ENCODE measurements at regions of chr10 and their contacts with region 1.

Region 1: GRCh38 chr10:128530301-128530700 is 404.1 kb upstream of the MKI67 start:
- DNase-seq: no peak
- H3K4me3 ChIP-seq: no peak overlapping the region
- H3K27ac ChIP-seq: no peak overlapping the region
- H3K4me1 ChIP-seq: no peaks in the 10 kb centered on the region
- H3K27me3 ChIP-seq: no peaks in the 10 kb centered on the region
- CTCF ChIP-seq: peak in 1 of 2 donors; percentile 12
- POLR2A ChIP-seq: no peak

Region 2: DNA sequence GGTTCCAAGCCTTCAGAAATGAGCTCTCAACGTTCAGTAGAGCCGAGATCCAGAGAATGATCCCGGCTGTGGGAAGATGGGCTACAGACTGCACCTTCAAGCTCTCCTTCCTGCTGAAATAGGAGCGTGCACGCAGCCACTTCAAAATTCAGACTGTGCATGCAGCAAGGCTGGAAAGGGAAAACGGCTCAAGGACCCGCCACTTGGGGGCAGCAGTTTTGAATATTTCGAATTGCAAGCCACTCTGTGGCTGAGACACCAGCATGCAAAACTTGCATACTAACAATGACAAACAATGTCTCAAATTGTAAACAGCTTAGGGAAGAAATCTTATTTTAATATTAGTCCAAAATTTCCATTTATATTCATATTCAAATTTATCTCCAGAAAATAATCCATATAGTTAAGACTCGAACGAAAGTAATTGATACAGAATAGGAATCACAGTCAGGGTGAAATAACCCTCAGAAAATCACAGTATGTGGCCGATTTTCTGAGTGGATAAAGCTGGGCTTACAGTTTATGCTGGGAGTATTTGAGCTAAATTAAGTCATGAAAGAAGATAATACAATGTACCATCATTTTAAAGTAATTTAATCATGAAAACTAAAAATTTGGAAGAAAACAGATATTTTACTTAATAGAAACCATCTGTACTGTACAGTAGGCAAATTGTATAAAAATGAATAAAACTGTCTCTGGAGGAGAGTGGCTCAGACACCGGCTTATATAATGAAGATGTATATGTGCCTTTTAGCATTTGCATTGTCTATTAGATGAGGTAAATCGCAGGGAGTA is 266.2 kb before region 1 on chr10:
- CTCF ChIA-PET with region 1: no interaction called
- POLR2A ChIA-PET with region 1: no interaction called
- dilution Hi-C with region 1: no loop called
- intact Hi-C with region 1: loop called (anchors 10 kb)
- DNase-seq: peak; percentile 52
- H3K4me3 ChIP-seq: no peak overlapping the region
- H3K27ac ChIP-seq: no peak overlapping the region
- H3K4me1 ChIP-seq: no peaks in the 10 kb centered on the region
- H3K27me3 ChIP-seq: peaks cover 2 to 12% of the 10 kb centered on the region in 2 experiments
- CTCF ChIP-seq: peak; percentile 60 to 73
- POLR2A ChIP-seq: no peak